ENCODE measurements at regions of chr2 and their contacts with region 1.

Region 1: DNA sequence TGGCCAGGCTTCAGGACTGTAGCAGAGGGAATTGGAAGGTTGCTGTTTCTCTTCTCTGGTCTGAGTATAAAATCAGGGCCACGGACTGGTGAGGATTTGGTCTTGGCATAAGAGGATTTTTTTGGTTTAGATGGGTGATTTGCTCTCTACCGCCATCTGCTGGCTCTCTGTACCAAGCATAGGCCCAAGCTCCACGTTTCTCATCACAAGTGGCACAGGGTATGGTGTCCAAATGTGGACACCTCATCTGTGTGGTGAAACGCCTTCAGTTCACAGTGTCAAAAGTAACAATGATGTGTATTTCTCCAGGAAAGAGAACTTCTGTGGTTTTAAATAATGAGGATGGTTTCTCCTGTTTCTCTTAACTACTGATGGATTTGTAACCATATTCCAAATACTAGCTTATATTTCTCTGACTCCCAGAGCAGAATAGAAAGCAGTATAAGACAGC is 115.1 kb downstream of the EML6 start:
- DNase-seq: peak; percentile 81
- H3K4me3 ChIP-seq: no peak overlapping the region
- H3K27ac ChIP-seq: no peak overlapping the region
- H3K4me1 ChIP-seq: peaks cover 11% of the 10 kb centered on the region
- H3K27me3 ChIP-seq: no peaks in the 10 kb centered on the region
- CTCF ChIP-seq: peak; percentile 90

Region 2: GRCh38 chr2:54106631-54107454 is 731.8 kb before region 1 on chr2:
- CTCF ChIA-PET with region 1: interaction called, 5 read pairs
- POLR2A ChIA-PET with region 1: no interaction called
- intact Hi-C with region 1: loop called (anchors 5 kb)
- DNase-seq: peak; percentile 73
- H3K4me3 ChIP-seq: no peak overlapping the region
- H3K27ac ChIP-seq: no peak overlapping the region
- H3K4me1 ChIP-seq: no peaks in the 10 kb centered on the region
- H3K27me3 ChIP-seq: no peaks in the 10 kb centered on the region
- CTCF ChIP-seq: peak; percentile 79

Region 3: DNA sequence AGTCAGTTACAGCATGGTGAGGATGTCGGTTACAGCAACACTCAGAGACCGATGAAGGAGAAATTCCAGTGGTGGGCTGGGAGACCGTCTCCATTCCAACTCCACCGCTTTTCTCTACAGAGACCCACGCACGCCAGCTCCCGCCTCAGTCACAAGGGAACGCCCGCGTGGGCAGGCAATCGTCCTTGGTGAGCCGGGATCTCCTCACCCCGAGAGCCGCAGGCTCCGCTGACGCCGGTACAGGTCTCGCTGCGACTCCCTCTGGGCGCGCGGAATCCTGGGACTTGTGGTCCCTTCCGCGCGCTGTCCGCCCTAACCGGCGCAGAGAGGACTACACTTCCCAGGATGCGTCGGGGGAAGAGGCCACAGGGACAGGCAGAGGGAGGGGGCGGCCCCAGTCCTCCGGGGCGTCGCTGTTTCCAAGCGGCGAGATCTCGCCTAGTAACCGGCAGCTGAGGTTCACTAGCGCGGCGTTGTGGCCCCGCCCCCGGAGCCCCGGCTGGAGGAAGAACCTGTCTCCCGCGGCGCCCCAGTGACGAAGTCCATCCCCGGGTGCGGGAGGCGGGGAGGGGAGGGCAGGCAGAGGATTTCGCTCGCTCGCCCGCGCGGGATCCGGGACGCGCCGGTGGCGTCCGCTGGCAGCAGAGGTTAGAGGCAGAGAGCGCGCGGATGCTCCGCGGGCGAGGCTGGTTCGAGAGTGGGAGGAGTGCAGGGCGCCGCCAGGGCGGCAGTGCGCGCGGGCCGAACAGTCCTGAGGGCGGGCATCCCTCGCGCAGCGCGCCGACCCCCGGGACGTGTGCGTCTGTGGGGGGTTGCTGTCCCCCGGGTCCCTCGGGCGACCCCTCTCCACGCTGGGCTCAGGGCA is 115.2 kb before region 1 on chr2 and contains the start of gene EML6:
- CTCF ChIA-PET with region 1: no interaction called
- POLR2A ChIA-PET with region 1: no interaction called
- intact Hi-C with region 1: loop called (anchors 5 kb)
- DNase-seq: peak; percentile 100
- H3K4me3 ChIP-seq: peak within 1 kb of the TSS; percentile 65
- H3K27ac ChIP-seq: peak within 1 kb of the TSS; percentile 54
- H3K4me1 ChIP-seq: peaks cover 6% of the 10 kb centered on the region
- H3K27me3 ChIP-seq: peaks cover 24% of the 10 kb centered on the region
- CTCF ChIP-seq: peak; percentile 24
- total RNA-seq, gene EML6: 1.7 and 1.9 TPM in 2 replicates

Region 4: GRCh38 chr2:54763636-54764291 is 74.8 kb before region 1 on chr2:
- CTCF ChIA-PET with region 1: no interaction called
- POLR2A ChIA-PET with region 1: no interaction called
- intact Hi-C with region 1: loop called (anchors 5 kb)
- DNase-seq: peak; percentile 43
- H3K4me3 ChIP-seq: no peak overlapping the region
- H3K27ac ChIP-seq: no peak overlapping the region
- H3K4me1 ChIP-seq: no peaks in the 10 kb centered on the region
- H3K27me3 ChIP-seq: no peaks in the 10 kb centered on the region
- CTCF ChIP-seq: peak; percentile 73

Region 5: GRCh38 chr2:54818226-54818625 is 20.4 kb before region 1 on chr2:
- CTCF ChIA-PET with region 1: no interaction called
- POLR2A ChIA-PET with region 1: no interaction called
- intact Hi-C with region 1: no loop called
- DNase-seq: no peak
- H3K4me3 ChIP-seq: no peak overlapping the region
- H3K27ac ChIP-seq: no peak overlapping the region
- H3K4me1 ChIP-seq: peaks cover 23% of the 10 kb centered on the region
- H3K27me3 ChIP-seq: no peaks in the 10 kb centered on the region
- CTCF ChIP-seq: no peak

Measured in A673 (cell line).